Activated CD8-positive, alpha-beta T cell treated with anti-CD3 and anti-CD28 coated beads, Interleukin-2, amount 10 ng/mL, durations not matched to agents 7 days and 5 days (primary cell): ENCODE measurements at regions of chr16 and their contacts with region 1.

Region 1: GRCh38 chr16:57544119-57544653 is 1.7 kb downstream of the ADGRG5 start:
- DNase-seq: peak; percentile 24
- ATAC-seq: no peak
- H3K4me3 Mint-ChIP-seq: peak overlapping the region; percentile 85
- H3K27ac Mint-ChIP-seq: peak overlapping the region; percentile 84
- H3K4me1 Mint-ChIP-seq: peaks cover 68% of the 10 kb centered on the region
- H3K27me3 Mint-ChIP-seq: no peaks in the 10 kb centered on the region

Region 2: GRCh38 chr16:57530104-57530521 is 14.1 kb before region 1 on chr16:
- CTCF ChIA-PET with region 1: interaction called, 3 read pairs
- POLR2A ChIA-PET with region 1: interaction called, 12 read pairs
- DNase-seq: peak; percentile 88
- ATAC-seq: peak; percentile 91
- H3K4me3 Mint-ChIP-seq: peak overlapping the region; percentile 71
- H3K27ac Mint-ChIP-seq: peak overlapping the region; percentile 99
- H3K4me1 Mint-ChIP-seq: peaks cover 65% of the 10 kb centered on the region
- H3K27me3 Mint-ChIP-seq: no peaks in the 10 kb centered on the region

Region 3: DNA sequence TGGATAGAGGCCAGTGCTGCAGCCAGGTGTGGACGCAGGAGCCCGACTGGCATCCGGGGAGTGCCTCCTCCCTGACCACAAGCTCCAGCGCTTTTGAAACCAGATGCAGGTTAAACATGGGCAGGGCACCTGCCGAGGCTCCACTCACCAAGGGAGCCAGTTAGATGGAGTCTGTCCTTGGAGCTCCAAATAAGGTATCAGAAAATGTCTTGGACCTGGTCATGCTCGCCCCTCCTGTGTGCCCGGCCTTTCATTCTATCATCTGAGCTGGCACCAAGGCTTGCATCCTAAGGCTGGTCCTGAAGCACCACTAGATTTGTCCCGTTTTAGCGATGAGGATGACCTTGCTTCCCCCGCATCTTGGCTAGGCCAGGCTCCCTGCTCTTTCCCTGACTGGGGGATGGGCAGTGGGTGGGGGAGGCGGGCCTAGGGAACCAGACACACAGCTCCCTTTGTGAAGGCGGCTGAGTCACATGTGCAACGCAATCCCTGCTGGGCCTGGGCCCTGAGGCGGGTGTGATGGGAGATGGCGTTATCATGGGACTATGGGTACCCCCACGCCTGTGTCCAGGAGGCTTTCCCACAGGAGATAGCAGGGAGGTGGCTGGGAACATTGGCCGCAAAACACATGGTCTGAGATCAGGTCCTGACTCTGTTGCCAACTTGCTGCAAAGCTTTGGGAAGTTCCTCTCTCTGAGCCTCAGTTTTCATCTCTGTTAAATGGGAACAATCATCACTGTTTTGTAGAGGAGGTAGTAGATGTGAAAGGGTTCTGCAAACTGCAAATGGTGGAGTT is 79.3 kb after region 1 on chr16:
- CTCF ChIA-PET with region 1: no interaction called
- POLR2A ChIA-PET with region 1: no interaction called
- DNase-seq: no peak
- ATAC-seq: no peak
- H3K4me3 Mint-ChIP-seq: no peak overlapping the region
- H3K27ac Mint-ChIP-seq: no peak overlapping the region
- H3K4me1 Mint-ChIP-seq: peaks cover 19% of the 10 kb centered on the region
- H3K27me3 Mint-ChIP-seq: peaks cover 4% of the 10 kb centered on the region